ENCODE measurements at regions of chr3 and their contacts with region 1.

Region 1: GRCh38 chr3:42652611-42653302 is 740 bp upstream of the ZBTB47 start:
- DNase-seq: peak in 1 of 2 donors; percentile 85
- ATAC-seq: peak; percentile 73
- H3K4me3 ChIP-seq: peak overlapping the region; percentile 8 to 68
- H3K27ac ChIP-seq: peak overlapping the region; percentile 14 to 94
- H3K4me1 ChIP-seq: peaks cover 0 to 2% of the 10 kb centered on the region in 2 donors
- H3K27me3 ChIP-seq: no peaks in the 10 kb centered on the region

Region 2: GRCh38 chr3:42600111-42600988 is 52.4 kb before region 1 on chr3 and contains the start of gene NKTR:
- intact Hi-C with region 1: loop called in 1 of 2 experiments (anchors 5 kb)
- DNase-seq: peak; percentile 97 to 99
- ATAC-seq: peak; percentile 98
- H3K4me3 ChIP-seq: peak within 1 kb of the TSS; percentile 62 to 73
- H3K27ac ChIP-seq: peak within 1 kb of the TSS; percentile 65 to 95
- H3K4me1 ChIP-seq: peaks cover 0 to 2% of the 10 kb centered on the region in 2 donors
- H3K27me3 ChIP-seq: no peaks in the 10 kb centered on the region
- total RNA-seq, gene NKTR: 98.5 to 163 TPM

Region 3: GRCh38 chr3:42742688-42743087 is 89.9 kb after region 1 on chr3:
- intact Hi-C with region 1: loop called (anchors 2 kb)
- DNase-seq: no peak
- ATAC-seq: no peak
- H3K4me3 ChIP-seq: no peak overlapping the region
- H3K27ac ChIP-seq: no peak overlapping the region
- H3K4me1 ChIP-seq: peaks cover 6 to 8% of the 10 kb centered on the region in 2 donors
- H3K27me3 ChIP-seq: no peaks in the 10 kb centered on the region

Region 4: DNA sequence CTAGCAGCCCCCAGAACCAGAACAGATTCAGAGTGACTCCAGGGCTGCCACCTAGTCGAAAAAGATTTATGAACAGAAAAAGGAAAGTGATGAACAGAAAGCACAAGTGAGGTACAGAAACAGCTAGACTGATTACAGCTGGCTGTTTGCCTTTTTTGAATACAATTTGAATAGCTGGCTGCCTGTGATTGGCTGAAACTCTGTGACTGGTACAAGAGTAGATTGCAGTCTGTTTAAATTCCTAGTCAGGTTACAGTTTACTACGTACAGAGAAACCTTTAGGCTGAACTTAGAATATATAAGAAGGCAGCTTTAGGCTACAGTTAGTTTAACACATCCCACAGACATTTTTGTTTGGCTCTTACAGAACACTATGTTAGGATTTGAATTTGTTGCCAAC is 110.3 kb after region 1 on chr3:
- intact Hi-C with region 1: no loop called
- DNase-seq: no peak
- ATAC-seq: no peak
- H3K4me3 ChIP-seq: no peak overlapping the region
- H3K27ac ChIP-seq: no peak overlapping the region
- H3K4me1 ChIP-seq: no peaks in the 10 kb centered on the region
- H3K27me3 ChIP-seq: no peaks in the 10 kb centered on the region

Measured in aorta (tissue), 5 donors.